GM12878 (cell line): ENCODE measurements at regions of chr1 and their contacts with region 1.

Region 1: GRCh38 chr1:235328357-235329138 is at the start of gene GGPS1:
- DNase-seq: peak; percentile 99
- ATAC-seq: peak; percentile 87
- H3K4me3 ChIP-seq: peak within 1 kb of the TSS; percentile 92
- H3K27ac ChIP-seq: peak within 1 kb of the TSS; percentile 93
- H3K4me1 ChIP-seq: peaks cover 8% of the 10 kb centered on the region; the same call in 1 of the 2 replicates
- H3K27me3 ChIP-seq: no peaks in the 10 kb centered on the region
- CTCF ChIP-seq: no peak
- EP300 ChIP-seq: no peak
- POLR2A ChIP-seq: peak; percentile 87
- RAD21 ChIP-seq: no peak
- polyA plus RNA-seq, gene GGPS1: 28.9 to 36.0 TPM

Region 2: DNA sequence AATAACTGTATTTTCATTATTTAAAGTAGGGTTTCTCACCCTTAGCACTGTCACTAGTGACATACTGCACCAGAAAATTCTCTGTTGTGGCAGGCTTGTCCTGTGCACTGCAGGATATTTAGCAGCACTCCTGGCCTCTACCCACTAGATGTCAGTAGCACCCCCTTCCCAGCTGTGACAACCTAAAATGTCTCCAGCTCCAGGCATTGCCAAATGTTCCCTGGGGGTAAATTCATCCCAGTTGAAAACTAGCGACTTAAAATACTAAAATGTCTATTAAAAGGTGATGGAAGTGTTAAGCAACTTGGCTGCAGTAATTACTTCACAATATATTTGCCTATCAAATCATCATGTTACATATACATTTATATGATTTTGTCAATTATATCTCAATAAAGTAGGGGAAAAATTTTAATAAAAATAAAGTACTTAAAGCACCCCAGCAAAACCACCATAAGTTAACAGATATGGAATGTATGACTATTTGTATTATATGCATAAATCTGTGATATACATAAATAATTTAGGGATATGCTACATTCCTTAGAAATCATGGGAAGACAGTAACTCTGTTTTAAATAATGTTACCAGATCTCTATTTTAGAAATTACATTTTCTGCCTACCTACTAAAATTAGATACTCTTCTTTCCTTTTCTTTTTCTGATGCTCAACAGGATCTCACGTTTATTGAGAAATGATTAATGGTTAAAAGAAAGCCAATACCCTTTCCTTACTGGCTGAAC is 75.2 kb before region 1 on chr1:
- CTCF ChIA-PET with region 1: interaction called, 23 read pairs
- POLR2A ChIA-PET with region 1: interaction called, 17 read pairs
- RAD21 ChIA-PET with region 1: interaction called, 15 read pairs
- SMC1A ChIA-PET with region 1: interaction called, 38 read pairs
- in situ Hi-C with region 1: no loop called
- intact Hi-C with region 1: loop called (anchors 2 kb)
- DNase-seq: no peak
- ATAC-seq: peak; percentile 100
- H3K4me3 ChIP-seq: no peak overlapping the region
- H3K27ac ChIP-seq: no peak overlapping the region
- H3K4me1 ChIP-seq: peaks cover 2% of the 10 kb centered on the region; the same call in 1 of the 2 replicates
- H3K27me3 ChIP-seq: no peaks in the 10 kb centered on the region
- CTCF ChIP-seq: peak; percentile 86 to 91 (median 88); a peak in 5 of 6 replicates
- EP300 ChIP-seq: no peak
- POLR2A ChIP-seq: no peak
- RAD21 ChIP-seq: peak; percentile 87

Region 3: DNA sequence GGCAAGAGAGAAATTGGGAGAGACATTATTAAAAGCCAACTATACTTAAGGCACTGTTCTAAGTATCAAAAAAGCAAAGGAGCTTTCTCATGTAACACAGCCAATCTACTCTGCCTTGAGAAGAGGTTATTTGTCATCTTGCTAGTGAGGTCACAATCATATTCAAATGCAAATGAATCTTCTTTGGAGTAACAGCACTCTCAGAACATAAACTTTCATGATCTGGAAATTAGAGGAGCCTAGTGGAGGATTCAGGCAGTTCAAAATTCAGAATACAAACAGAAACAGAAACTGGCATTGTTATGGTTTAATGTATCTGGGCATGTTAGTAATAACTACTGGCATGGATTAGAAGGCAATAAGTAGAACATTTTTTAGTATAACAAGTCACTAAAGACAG is 57.9 kb before region 1 on chr1:
- CTCF ChIA-PET with region 1: interaction called, 11 read pairs
- POLR2A ChIA-PET with region 1: interaction called, 11 read pairs
- RAD21 ChIA-PET with region 1: interaction called, 6 read pairs
- SMC1A ChIA-PET with region 1: interaction called, 8 read pairs
- in situ Hi-C with region 1: no loop called
- intact Hi-C with region 1: no loop called
- DNase-seq: no peak
- ATAC-seq: peak; percentile 76
- H3K4me3 ChIP-seq: no peak overlapping the region
- H3K27ac ChIP-seq: peak overlapping the region; percentile 22; the same call in 1 of the 2 replicates
- H3K4me1 ChIP-seq: peaks cover 7% of the 10 kb centered on the region
- H3K27me3 ChIP-seq: no peaks in the 10 kb centered on the region
- CTCF ChIP-seq: no peak
- EP300 ChIP-seq: no peak
- POLR2A ChIP-seq: no peak
- RAD21 ChIP-seq: no peak

Region 4: GRCh38 chr1:235290740-235291502 is 37.6 kb before region 1 on chr1:
- CTCF ChIA-PET with region 1: no interaction called
- POLR2A ChIA-PET with region 1: no interaction called
- RAD21 ChIA-PET with region 1: no interaction called
- SMC1A ChIA-PET with region 1: no interaction called
- in situ Hi-C with region 1: no loop called
- intact Hi-C with region 1: no loop called
- DNase-seq: no peak
- ATAC-seq: no peak
- H3K4me3 ChIP-seq: no peak overlapping the region
- H3K27ac ChIP-seq: no peak overlapping the region
- H3K4me1 ChIP-seq: no peaks in the 10 kb centered on the region; the same call in 1 of the 2 replicates
- H3K27me3 ChIP-seq: no peaks in the 10 kb centered on the region
- CTCF ChIP-seq: no peak
- EP300 ChIP-seq: no peak
- POLR2A ChIP-seq: no peak
- RAD21 ChIP-seq: no peak

Region 5: DNA sequence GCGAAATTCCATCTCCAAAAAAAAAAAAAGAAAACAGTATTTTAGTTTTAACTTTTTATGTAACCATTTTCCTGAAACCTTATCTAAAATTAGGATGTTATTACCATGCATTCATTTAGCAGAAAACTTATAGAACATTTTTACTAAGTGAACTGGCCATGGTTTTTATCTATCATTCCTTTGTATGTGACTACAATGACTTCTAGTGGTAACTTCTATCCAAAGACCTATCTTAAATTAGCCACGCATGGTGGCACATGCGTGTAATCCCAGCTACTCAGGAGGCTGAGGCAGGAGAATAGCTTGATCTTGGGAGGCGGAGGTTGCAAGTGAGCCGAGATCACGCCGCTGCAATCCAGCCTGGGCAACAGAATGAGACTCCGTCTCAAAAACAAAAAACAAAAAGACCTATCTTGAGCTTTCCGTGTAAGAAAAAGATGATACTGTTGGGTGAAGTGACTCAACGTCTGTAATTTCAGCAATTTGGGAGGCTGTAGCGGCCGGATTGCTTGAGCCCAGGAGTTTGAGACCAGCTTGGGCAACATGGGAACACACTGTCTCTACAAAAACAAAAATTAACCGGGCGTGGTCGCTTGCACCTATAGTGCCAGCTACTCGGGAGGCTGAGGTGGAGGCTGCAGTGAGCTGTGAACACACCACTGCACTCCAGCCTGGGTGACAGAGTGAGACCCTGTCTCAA is 11.3 kb after region 1 on chr1:
- CTCF ChIA-PET with region 1: interaction called, 11 read pairs
- POLR2A ChIA-PET with region 1: interaction called, 5 read pairs
- RAD21 ChIA-PET with region 1: interaction called, 3 read pairs
- SMC1A ChIA-PET with region 1: interaction called, 5 read pairs
- in situ Hi-C with region 1: no loop called
- intact Hi-C with region 1: no loop called
- DNase-seq: no peak
- ATAC-seq: no peak
- H3K4me3 ChIP-seq: no peak overlapping the region
- H3K27ac ChIP-seq: no peak overlapping the region
- H3K4me1 ChIP-seq: 0 out of 2 replicates have a peak, but pooled peaks cover 3% of the 10 kb centered on the region
- H3K27me3 ChIP-seq: no peaks in the 10 kb centered on the region
- CTCF ChIP-seq: no peak; a peak in 1 of 6 replicates
- EP300 ChIP-seq: no peak
- POLR2A ChIP-seq: no peak
- RAD21 ChIP-seq: 0 out of 2 replicates have a peak, but pooled peaks have one; percentile 14

Region 6: DNA sequence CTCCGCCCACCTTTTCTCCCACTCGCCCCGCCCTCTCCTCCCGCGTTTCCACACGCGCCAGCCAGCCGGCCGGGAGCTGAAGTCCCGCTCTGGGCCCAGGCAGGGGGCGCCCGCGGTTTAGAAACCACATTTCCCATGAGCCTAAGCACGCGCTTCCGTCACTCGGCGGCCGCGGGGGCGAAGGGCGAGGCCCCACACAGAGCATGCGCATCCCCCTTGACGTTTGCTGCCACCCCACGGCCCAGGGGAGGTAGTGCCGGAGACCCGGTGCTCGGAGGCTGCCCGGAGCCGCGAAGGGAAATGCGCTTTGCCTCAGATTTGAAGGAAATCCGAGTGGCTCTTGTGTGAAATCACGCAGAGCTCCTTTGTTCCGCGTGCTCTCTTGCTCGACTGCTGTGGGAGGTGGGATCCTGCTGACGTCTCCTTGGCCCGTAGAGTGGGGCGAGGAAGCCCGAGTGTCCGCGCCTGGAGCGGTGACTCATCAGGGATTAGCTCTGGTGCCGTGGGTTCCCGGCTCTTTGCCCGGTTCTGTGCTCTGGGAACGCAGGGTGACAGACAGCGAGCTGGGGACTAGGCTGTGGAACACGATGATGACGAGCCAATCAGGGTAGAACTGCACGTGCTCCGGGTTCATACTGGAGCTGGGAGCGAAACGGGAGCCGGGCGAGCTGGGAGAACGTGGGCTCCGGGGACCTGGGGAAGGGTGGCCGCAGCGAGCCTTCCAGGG is 176.1 kb after region 1 on chr1:
- CTCF ChIA-PET with region 1: no interaction called
- POLR2A ChIA-PET with region 1: interaction called, 3 read pairs
- RAD21 ChIA-PET with region 1: interaction called, 4 read pairs
- SMC1A ChIA-PET with region 1: no interaction called
- in situ Hi-C with region 1: no loop called
- intact Hi-C with region 1: loop called (anchors 5 kb)
- DNase-seq: peak; percentile 96
- ATAC-seq: peak; percentile 86
- H3K4me3 ChIP-seq: peak overlapping the region; percentile 92
- H3K27ac ChIP-seq: peak overlapping the region; percentile 95
- H3K4me1 ChIP-seq: peaks cover 6% of the 10 kb centered on the region
- H3K27me3 ChIP-seq: no peaks in the 10 kb centered on the region
- CTCF ChIP-seq: peak; percentile 82 to 91 (median 86)
- EP300 ChIP-seq: peak in 1 of 2 experiments; percentile 51; a peak in 1 of 4 replicates
- POLR2A ChIP-seq: peak; percentile 86
- RAD21 ChIP-seq: peak; percentile 48; the same call in 1 of the 2 replicates